A673 (cell line): ENCODE measurements at regions of chr2 and their contacts with region 1.

Region 1: DNA sequence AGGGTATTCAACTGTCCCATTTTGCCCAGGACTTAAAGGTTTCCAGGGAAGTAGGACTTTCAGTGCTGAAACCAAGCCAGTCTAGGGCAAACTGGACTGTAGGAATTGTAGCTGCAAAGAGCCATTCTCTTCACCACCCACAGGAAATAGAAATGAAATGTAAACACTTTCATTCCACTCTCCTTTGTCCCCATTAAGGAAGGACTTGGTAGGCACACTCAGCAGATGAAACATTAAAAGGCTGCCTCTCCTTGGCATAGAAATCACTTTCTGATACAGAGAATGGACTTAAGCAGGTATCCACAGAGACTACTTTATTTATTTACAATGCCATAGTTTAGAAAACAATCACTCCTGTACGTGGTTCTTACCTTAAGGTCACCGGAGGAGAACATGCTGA is 102.9 kb upstream of the CCDC195 start:
- DNase-seq: no peak
- H3K4me3 ChIP-seq: no peak overlapping the region
- H3K27ac ChIP-seq: no peak overlapping the region
- H3K4me1 ChIP-seq: no peaks in the 10 kb centered on the region
- H3K27me3 ChIP-seq: no peaks in the 10 kb centered on the region
- CTCF ChIP-seq: no peak

Region 2: DNA sequence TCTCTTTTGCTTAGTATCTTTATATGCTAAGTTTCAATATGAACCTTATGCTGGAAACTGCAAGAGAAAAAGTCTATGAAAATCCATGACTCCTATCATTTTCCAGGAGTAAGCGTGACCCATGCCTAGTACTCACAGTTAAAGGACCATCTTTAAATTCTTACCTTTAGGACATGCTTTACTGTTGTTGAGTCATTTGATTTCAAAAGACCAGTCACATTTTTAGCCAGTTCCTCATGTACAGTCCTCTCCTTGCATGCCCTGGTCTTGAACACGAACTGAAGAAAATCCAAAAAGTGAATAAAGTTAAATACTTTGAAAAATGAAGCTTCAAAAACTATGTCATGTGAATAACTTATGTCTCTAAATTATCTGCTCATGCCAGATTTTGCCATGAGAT is 14.9 kb after region 1 on chr2:
- CTCF ChIA-PET with region 1: interaction called, 11 read pairs
- POLR2A ChIA-PET with region 1: no interaction called
- intact Hi-C with region 1: no loop called
- DNase-seq: no peak
- H3K4me3 ChIP-seq: no peak overlapping the region
- H3K27ac ChIP-seq: no peak overlapping the region
- H3K4me1 ChIP-seq: peaks cover 4% of the 10 kb centered on the region
- H3K27me3 ChIP-seq: no peaks in the 10 kb centered on the region
- CTCF ChIP-seq: no peak

Region 3: GRCh38 chr2:225494100-225494459 is 675.0 kb after region 1 on chr2:
- CTCF ChIA-PET with region 1: no interaction called
- POLR2A ChIA-PET with region 1: no interaction called
- intact Hi-C with region 1: no loop called
- DNase-seq: no peak
- H3K4me3 ChIP-seq: no peak overlapping the region
- H3K27ac ChIP-seq: no peak overlapping the region
- H3K4me1 ChIP-seq: no peaks in the 10 kb centered on the region
- H3K27me3 ChIP-seq: no peaks in the 10 kb centered on the region
- CTCF ChIP-seq: no peak